ENCODE measurements at regions of chr5 and their contacts with region 1.

Region 1: DNA sequence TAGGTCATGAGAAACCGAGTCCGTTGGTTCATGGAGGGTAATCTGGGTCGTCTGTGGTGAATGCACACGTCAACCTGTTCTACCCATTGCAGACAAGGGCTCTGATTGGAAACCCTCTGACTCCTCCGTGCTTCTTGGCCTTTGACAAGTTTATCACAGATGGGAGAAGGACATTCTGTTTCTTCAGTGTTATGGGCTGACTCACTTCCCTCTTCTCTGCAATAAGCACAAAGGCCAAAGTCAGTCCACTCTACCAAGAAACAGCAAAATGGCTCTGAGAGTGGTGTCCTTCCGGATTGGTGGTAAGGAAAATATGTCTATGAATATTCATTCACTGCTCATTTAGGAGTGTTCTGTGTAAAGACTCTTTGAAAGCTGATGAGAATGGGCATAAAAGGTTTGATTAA is 89.3 kb downstream of the FEM1C start:
- DNase-seq: peak; percentile 87
- H3K4me3 ChIP-seq: no peak overlapping the region
- H3K27ac ChIP-seq: peak overlapping the region; percentile 56
- H3K4me1 ChIP-seq: peaks cover 27% of the 10 kb centered on the region
- H3K27me3 ChIP-seq: no peaks in the 10 kb centered on the region
- CTCF ChIP-seq: no peak
- POLR2A ChIP-seq: no peak

Region 2: GRCh38 chr5:115377468-115378217 is 77.7 kb before region 1 on chr5:
- CTCF ChIA-PET with region 1: no interaction called
- POLR2A ChIA-PET with region 1: no interaction called
- dilution Hi-C with region 1: no loop called
- intact Hi-C with region 1: no loop called
- DNase-seq: peak; percentile 51
- H3K4me3 ChIP-seq: no peak overlapping the region
- H3K27ac ChIP-seq: no peak overlapping the region
- H3K4me1 ChIP-seq: peaks cover 7% of the 10 kb centered on the region
- H3K27me3 ChIP-seq: no peaks in the 10 kb centered on the region
- CTCF ChIP-seq: no peak
- POLR2A ChIP-seq: no peak

Region 3: DNA sequence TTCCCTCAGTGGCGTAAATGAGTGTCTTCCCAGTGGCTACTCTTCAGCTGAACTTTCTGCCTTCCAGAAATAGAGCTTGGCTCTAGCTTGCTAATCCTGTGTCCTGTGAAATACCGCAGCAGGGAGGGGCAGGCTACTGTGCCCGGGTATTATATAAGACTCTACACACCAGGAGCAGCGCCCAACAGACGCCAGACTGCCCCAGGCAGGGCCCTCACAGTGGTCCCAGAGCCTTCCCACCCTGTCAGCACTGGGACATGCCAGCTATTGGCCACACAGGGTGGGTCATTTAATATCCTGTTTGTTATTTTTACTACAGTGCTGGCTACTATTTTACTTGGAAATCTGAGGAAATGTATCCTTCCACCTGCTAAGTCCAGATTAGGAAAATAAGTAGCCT is 31.8 kb before region 1 on chr5:
- CTCF ChIA-PET with region 1: interaction called, 6 read pairs
- POLR2A ChIA-PET with region 1: no interaction called
- dilution Hi-C with region 1: no loop called
- intact Hi-C with region 1: loop called (anchors 2 kb)
- DNase-seq: peak; percentile 55
- H3K4me3 ChIP-seq: no peak overlapping the region
- H3K27ac ChIP-seq: no peak overlapping the region
- H3K4me1 ChIP-seq: peaks cover 32% of the 10 kb centered on the region
- H3K27me3 ChIP-seq: no peaks in the 10 kb centered on the region
- CTCF ChIP-seq: no peak
- POLR2A ChIP-seq: no peak